ENCODE measurements at regions of chr2 and their contacts with region 1.

Region 1: DNA sequence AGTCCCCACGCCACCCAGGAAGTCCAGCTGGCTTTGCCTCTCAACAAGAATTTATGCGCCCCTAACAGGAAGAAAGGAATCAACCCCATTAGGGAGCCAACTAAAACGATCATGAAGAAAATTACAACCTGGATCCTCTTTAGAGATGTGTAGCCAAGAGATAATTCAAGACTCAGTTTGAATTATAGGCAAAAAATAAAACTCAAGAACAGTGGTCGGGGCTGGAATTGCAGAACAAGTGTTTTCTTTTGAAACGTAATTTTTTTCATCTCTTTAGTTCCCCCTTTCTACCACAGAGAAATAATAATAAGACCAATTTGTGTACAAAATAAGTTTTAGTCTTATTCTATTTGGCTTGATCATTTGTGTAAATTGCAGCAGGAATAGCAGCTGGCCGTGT is 22.4 kb downstream of the PDCD1 start:
- DNase-seq: no peak
- CTCF ChIP-seq: no peak

Region 2: DNA sequence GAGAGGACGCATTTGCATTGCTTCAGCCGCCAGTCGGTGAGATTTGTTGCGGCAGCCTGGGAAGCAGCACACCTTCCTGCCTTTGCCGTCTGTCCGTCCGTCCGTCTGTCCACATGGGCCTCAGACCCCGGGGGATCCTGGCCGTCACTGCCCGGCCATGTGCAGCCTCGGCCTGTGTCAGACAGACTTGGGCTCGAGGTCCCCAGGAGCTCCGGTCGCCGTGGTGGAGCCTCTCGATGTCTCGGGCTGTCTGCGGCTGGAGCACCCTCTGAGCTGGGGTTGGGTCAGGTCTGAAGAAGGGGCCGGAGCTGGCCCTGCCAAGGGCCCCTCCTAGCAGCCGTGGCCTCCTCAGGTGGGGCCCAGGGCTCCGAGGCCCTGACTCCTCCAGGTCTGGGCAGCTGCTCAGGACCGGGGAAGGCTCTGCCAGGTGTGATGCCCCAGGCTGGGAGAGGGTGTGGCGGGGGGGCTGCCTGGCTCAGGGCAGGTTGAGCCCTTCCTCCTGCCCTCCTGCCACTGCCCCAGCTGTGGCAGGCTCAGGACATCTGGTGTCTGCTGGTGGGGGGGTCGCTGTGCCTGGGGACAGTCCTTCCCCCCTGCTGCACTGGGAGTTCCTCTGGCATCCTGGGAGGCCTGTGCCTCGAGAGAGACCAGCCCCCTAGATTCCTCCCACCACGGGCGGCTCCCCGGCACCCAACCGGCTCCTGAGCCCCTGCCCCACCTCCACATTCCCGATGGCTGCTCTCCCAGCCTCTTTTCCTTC is 15.5 kb before region 1 on chr2:
- CTCF ChIA-PET with region 1: interaction called, 14 read pairs
- POLR2A ChIA-PET with region 1: no interaction called
- DNase-seq: peak; percentile 13
- CTCF ChIP-seq: no peak

Region 3: DNA sequence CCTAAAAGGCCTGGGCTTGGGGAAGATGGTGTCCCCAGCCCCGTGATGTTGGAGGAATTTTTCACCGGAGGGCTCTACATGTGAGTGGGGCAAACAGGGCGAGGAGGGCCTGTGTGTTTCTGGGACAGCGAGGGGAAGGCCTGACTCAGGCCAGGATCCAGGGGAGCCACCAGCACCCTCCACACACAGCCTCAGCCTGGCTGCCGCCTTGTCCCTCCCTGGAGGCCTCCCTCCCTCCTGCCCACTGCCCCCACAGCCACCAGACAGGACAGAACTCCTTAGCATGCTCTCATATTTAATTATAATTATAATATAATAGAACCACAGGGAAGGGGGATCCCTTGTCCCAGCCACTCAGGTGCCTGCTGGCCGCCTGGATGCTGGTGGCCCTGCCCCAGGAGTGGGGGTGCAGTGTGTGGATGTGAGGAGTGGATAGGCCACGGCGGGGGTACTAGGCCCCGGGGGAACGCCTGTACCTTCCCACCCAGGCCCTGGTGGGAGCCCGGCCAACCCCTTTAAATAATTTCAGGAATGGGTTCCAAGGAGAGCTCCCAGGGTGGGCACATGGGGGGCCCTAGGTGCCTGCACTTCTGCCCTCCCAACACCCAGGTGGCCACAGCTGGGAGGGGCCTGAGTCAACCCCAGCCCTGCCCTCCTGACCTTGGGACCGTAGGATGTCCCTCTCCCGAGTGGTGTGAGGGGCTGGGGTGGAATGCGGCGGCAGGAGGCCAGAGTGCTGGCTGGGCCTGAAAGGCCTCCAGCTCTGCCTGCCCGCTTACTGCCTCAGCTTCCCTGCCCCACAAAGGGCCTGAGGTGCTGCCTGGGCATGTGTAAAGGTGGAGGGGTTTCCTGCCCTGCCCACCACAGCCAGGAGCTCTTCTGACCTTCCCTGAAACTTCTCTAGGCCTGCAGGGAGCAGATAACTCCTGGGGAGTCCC is 13.6 kb after region 1 on chr2:
- CTCF ChIA-PET with region 1: no interaction called
- POLR2A ChIA-PET with region 1: no interaction called
- DNase-seq: peak; percentile 18
- CTCF ChIP-seq: no peak

Region 4: GRCh38 chr2:241959751-241960269 is 123.5 kb after region 1 on chr2:
- CTCF ChIA-PET with region 1: no interaction called
- POLR2A ChIA-PET with region 1: no interaction called
- DNase-seq: no peak
- CTCF ChIP-seq: no peak

Measured in GM10248 (cell line).